B cell (primary cell): ENCODE measurements at regions of chr12 and their contacts with region 1.

Region 1: GRCh38 chr12:77049767-77050353 is 15.5 kb downstream of the E2F7 start:
- DNase-seq: peak; percentile 67
- ATAC-seq: peak; percentile 84
- H3K4me3 ChIP-seq: no peak overlapping the region
- H3K4me3 Mint-ChIP-seq: no peak overlapping the region
- H3K27ac ChIP-seq: no peak overlapping the region
- H3K27ac Mint-ChIP-seq: no peak overlapping the region
- H3K4me1 ChIP-seq: no peaks in the 10 kb centered on the region
- H3K4me1 Mint-ChIP-seq: peaks cover 3% of the 10 kb centered on the region
- H3K27me3 ChIP-seq: no peaks in the 10 kb centered on the region
- H3K27me3 Mint-ChIP-seq: no peaks in the 10 kb centered on the region
- CTCF ChIP-seq: peak; percentile 86

Region 2: GRCh38 chr12:77060136-77060882 is 10.4 kb after region 1 on chr12:
- CTCF ChIA-PET with region 1: interaction called, 32 read pairs
- POLR2A ChIA-PET with region 1: no interaction called
- intact Hi-C with region 1: loop called (anchors 1 kb)
- DNase-seq: peak; percentile 69
- ATAC-seq: peak; percentile 75
- H3K4me3 ChIP-seq: peak overlapping the region in 1 of 5 experiments; percentile 38
- H3K4me3 Mint-ChIP-seq: peak overlapping the region; percentile 23
- H3K27ac ChIP-seq: peak overlapping the region; percentile 3 to 12
- H3K27ac Mint-ChIP-seq: peak overlapping the region; percentile 22
- H3K4me1 ChIP-seq: peaks cover 28 to 41% of the 10 kb centered on the region in 2 donors
- H3K4me1 Mint-ChIP-seq: peaks cover 42% of the 10 kb centered on the region
- H3K27me3 ChIP-seq: peaks cover 0 to 22% (median 13%) of the 10 kb centered on the region in 4 experiments
- H3K27me3 Mint-ChIP-seq: peaks cover 10% of the 10 kb centered on the region
- CTCF ChIP-seq: no peak

Region 3: DNA sequence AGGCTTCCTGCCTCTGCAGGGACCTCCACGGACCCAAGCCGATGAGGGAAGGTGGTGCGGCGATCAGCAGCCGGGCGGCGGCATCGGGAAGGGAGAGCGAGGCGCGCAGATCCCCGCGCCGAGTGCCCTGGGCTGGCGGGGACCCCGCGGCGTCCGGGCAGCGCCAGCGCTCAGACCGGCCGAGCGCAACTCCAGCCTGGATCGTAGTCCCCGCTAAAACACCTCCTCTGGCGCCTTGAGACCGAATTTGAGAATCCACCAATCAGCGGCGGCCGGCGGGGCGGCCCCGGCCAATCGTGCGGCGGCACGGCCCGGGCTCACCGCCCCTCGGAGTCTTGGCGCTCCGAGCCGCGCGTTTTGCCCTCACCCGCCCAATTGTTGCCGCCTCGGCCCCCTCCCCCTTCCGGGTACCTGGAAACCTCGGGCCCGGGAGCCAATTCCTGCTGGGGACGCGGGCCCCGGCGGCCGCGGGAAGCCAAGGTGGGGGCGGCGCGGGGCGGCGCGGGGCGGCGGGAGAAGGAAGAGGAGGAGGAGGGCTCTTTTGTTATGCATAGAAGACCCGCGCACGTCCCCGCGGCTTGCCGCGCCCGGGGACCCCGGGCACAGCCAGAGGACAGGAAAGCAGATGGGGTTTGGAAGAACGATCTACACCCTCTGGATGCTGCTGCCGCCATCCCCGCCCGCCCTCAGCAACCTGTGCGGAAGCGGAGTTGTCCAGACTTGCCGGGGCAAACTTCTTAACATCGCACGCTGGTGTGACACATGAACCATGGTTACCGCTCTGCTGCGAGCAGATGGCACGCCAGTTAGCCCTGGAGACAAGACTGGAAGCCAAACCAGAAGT is 15.7 kb after region 1 on chr12 and contains the start of gene E2F7:
- CTCF ChIA-PET with region 1: interaction called, 32 read pairs
- POLR2A ChIA-PET with region 1: no interaction called
- intact Hi-C with region 1: loop called (anchors 1 kb)
- DNase-seq: peak; percentile 86
- ATAC-seq: peak; percentile 89
- H3K4me3 ChIP-seq: peak within 1 kb of the TSS; percentile 47 to 79 (median 63)
- H3K4me3 Mint-ChIP-seq: peak within 1 kb of the TSS; percentile 90
- H3K27ac ChIP-seq: no peak within 1 kb of the TSS
- H3K27ac Mint-ChIP-seq: peak within 1 kb of the TSS; percentile 48
- H3K4me1 ChIP-seq: peaks cover 22 to 31% of the 10 kb centered on the region in 2 donors
- H3K4me1 Mint-ChIP-seq: peaks cover 35% of the 10 kb centered on the region
- H3K27me3 ChIP-seq: peaks cover 0 to 22% (median 13%) of the 10 kb centered on the region in 4 experiments
- H3K27me3 Mint-ChIP-seq: peaks cover 10% of the 10 kb centered on the region
- CTCF ChIP-seq: no peak
- total RNA-seq, gene E2F7: 0.29 and 0.42 TPM in 2 replicates

Region 4: GRCh38 chr12:77685112-77685511 is 635.3 kb after region 1 on chr12:
- CTCF ChIA-PET with region 1: no interaction called
- POLR2A ChIA-PET with region 1: no interaction called
- intact Hi-C with region 1: loop called (anchors 10 kb)
- DNase-seq: no peak
- ATAC-seq: no peak
- H3K4me3 ChIP-seq: no peak overlapping the region
- H3K4me3 Mint-ChIP-seq: no peak overlapping the region
- H3K27ac ChIP-seq: no peak overlapping the region
- H3K27ac Mint-ChIP-seq: no peak overlapping the region
- H3K4me1 ChIP-seq: no peaks in the 10 kb centered on the region
- H3K4me1 Mint-ChIP-seq: no peaks in the 10 kb centered on the region
- H3K27me3 ChIP-seq: no peaks in the 10 kb centered on the region
- H3K27me3 Mint-ChIP-seq: no peaks in the 10 kb centered on the region
- CTCF ChIP-seq: no peak

Region 5: GRCh38 chr12:77925536-77926108 is 875.8 kb after region 1 on chr12:
- CTCF ChIA-PET with region 1: interaction called, 6 read pairs
- POLR2A ChIA-PET with region 1: no interaction called
- intact Hi-C with region 1: loop called (anchors 2 kb)
- DNase-seq: peak; percentile 53
- ATAC-seq: peak; percentile 63
- H3K4me3 ChIP-seq: no peak overlapping the region
- H3K4me3 Mint-ChIP-seq: no peak overlapping the region
- H3K27ac ChIP-seq: no peak overlapping the region
- H3K27ac Mint-ChIP-seq: no peak overlapping the region
- H3K4me1 ChIP-seq: no peaks in the 10 kb centered on the region
- H3K4me1 Mint-ChIP-seq: peaks cover 2% of the 10 kb centered on the region
- H3K27me3 ChIP-seq: no peaks in the 10 kb centered on the region
- H3K27me3 Mint-ChIP-seq: no peaks in the 10 kb centered on the region
- CTCF ChIP-seq: peak; percentile 69